ENCODE measurements at regions of chr16 and their contacts with region 1.

Region 1: DNA sequence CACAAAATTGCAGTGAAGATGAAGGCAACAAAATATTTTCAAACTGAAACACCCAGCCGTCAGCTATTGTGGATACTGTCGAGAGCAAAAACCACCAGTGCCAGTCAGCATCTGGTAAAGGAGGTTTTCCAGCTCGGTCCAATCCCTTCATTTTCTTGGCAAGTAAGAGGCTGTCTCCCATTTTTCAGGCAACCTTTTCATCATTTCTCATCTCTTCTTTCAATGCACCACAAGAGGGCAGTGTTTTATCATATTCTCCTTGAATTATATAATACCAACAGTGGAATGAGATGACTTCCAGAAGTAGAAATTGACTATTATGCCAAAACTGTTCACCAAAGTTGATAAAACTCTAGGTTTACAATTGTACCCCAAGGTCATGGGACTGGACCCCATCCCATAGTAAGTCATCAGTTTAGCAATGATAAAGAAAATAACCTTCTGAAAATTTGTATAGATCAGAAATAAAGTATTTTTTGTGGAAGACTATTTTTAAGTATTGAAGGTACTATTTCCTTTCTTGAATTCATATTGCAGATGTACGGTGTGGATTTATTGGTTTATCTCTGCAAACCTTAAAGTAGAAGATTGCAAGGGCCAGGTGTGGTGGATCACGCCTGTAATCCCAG is 16.8 kb downstream of the NQO1 start:
- DNase-seq: peak in 7 of 9 donors; percentile 35 to 67 (median 59)
- ATAC-seq: peak; percentile 78
- H3K4me3 ChIP-seq: no peak overlapping the region
- H3K4me3 Mint-ChIP-seq: no peak overlapping the region
- H3K27ac ChIP-seq: no peak overlapping the region
- H3K27ac Mint-ChIP-seq: peak overlapping the region in 6 of 9 donors; percentile 16 to 61 (median 56)
- H3K4me1 ChIP-seq: no peaks in the 10 kb centered on the region
- H3K4me1 Mint-ChIP-seq: peaks cover 0 to 6% (median 0%) of the 10 kb centered on the region in 7 donors
- H3K27me3 ChIP-seq: no peaks in the 10 kb centered on the region
- H3K27me3 Mint-ChIP-seq: no peaks in the 10 kb centered on the region

Region 2: DNA sequence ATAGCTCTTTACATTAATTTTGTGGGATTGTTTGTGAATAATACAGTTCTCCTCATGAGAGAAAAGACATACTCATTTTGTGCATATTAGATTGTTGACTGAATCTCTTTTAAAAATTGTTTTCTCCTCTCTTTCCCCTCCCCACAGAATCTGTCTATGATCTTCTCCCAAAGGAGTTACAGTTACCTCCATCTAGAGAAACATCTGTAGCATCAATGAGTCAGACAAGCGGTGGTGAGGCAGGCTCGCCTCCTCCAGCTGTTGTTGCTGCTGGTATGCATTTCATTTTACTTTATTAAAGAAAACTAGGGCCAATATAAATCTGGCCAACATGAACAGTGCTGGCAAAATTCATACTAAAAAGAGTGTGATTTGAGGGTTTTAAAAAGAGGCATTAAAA is 83.3 kb before region 1 on chr16:
- CTCF ChIA-PET with region 1: no interaction called
- POLR2A ChIA-PET with region 1: no interaction called
- intact Hi-C with region 1: no loop called
- DNase-seq: no peak
- ATAC-seq: no peak
- H3K4me3 ChIP-seq: no peak overlapping the region
- H3K4me3 Mint-ChIP-seq: no peak overlapping the region
- H3K27ac ChIP-seq: no peak overlapping the region
- H3K27ac Mint-ChIP-seq: no peak overlapping the region
- H3K4me1 ChIP-seq: no peaks in the 10 kb centered on the region
- H3K4me1 Mint-ChIP-seq: peaks cover 3 to 12% (median 8%) of the 10 kb centered on the region in 7 donors
- H3K27me3 ChIP-seq: no peaks in the 10 kb centered on the region
- H3K27me3 Mint-ChIP-seq: no peaks in the 10 kb centered on the region

Region 3: GRCh38 chr16:69761983-69762813 is 52.6 kb after region 1 on chr16 and contains the start of gene WWP2:
- CTCF ChIA-PET with region 1: interaction called, 5 read pairs
- POLR2A ChIA-PET with region 1: interaction called, 3 read pairs
- intact Hi-C with region 1: loop called in 1 of 2 experiments (anchors 2 kb)
- DNase-seq: peak; percentile 68 to 81 (median 77)
- ATAC-seq: peak; percentile 86
- H3K4me3 ChIP-seq: peak within 1 kb of the TSS; percentile 88
- H3K4me3 Mint-ChIP-seq: peak within 1 kb of the TSS; percentile 77 to 96 (median 94)
- H3K27ac ChIP-seq: peak within 1 kb of the TSS; percentile 92
- H3K27ac Mint-ChIP-seq: peak within 1 kb of the TSS; percentile 93 to 99 (median 98)
- H3K4me1 ChIP-seq: peaks cover 10 to 14% of the 10 kb centered on the region in 2 donors
- H3K4me1 Mint-ChIP-seq: peaks cover 16 to 47% (median 37%) of the 10 kb centered on the region in 7 donors
- H3K27me3 ChIP-seq: no peaks in the 10 kb centered on the region
- H3K27me3 Mint-ChIP-seq: peaks cover 0 to 5% (median 0%) of the 10 kb centered on the region in 5 donors
- total RNA-seq, gene WWP2: 58.4 to 81.3 (median 72.1) TPM

Region 4: DNA sequence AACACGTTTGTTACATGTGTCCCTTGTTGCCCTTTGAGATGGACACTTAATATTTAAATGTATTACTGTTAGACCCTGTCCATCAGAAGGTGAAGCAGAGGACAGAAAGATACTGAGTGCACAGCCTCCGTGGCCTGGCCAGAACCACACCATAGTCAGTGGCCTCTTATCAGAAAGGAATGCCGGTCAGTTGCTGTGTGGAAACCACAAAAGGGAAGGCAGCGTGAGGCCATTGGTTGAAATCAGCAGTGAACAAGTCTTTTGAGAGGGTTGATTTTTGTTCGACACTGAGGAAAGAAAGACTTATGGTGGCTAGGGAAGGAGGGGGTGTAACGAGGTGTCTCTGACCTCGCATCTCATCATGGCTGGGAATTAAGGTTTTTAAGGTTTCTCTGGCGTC is 156.1 kb after region 1 on chr16:
- CTCF ChIA-PET with region 1: no interaction called
- POLR2A ChIA-PET with region 1: no interaction called
- intact Hi-C with region 1: no loop called
- DNase-seq: no peak
- ATAC-seq: no peak
- H3K4me3 ChIP-seq: no peak overlapping the region
- H3K4me3 Mint-ChIP-seq: no peak overlapping the region
- H3K27ac ChIP-seq: no peak overlapping the region
- H3K27ac Mint-ChIP-seq: no peak overlapping the region
- H3K4me1 ChIP-seq: no peaks in the 10 kb centered on the region
- H3K4me1 Mint-ChIP-seq: peaks cover 0 to 5% (median 0%) of the 10 kb centered on the region in 7 donors
- H3K27me3 ChIP-seq: no peaks in the 10 kb centered on the region
- H3K27me3 Mint-ChIP-seq: no peaks in the 10 kb centered on the region

Region 5: GRCh38 chr16:69930117-69930776 is 220.7 kb after region 1 on chr16:
- CTCF ChIA-PET with region 1: no interaction called
- POLR2A ChIA-PET with region 1: no interaction called
- intact Hi-C with region 1: loop called in 1 of 2 experiments (anchors 5 kb)
- DNase-seq: peak in 8 of 9 donors; percentile 15 to 55 (median 42)
- ATAC-seq: peak; percentile 81
- H3K4me3 ChIP-seq: no peak overlapping the region
- H3K4me3 Mint-ChIP-seq: no peak overlapping the region
- H3K27ac ChIP-seq: no peak overlapping the region
- H3K27ac Mint-ChIP-seq: peak overlapping the region in 1 of 9 donors; percentile 33
- H3K4me1 ChIP-seq: no peaks in the 10 kb centered on the region
- H3K4me1 Mint-ChIP-seq: peaks cover 0 to 3% (median 0%) of the 10 kb centered on the region in 7 donors
- H3K27me3 ChIP-seq: no peaks in the 10 kb centered on the region
- H3K27me3 Mint-ChIP-seq: no peaks in the 10 kb centered on the region